Tibial artery (tissue), 4 donors: ENCODE measurements at regions of chr7 and their contacts with region 1.

Region 1: DNA sequence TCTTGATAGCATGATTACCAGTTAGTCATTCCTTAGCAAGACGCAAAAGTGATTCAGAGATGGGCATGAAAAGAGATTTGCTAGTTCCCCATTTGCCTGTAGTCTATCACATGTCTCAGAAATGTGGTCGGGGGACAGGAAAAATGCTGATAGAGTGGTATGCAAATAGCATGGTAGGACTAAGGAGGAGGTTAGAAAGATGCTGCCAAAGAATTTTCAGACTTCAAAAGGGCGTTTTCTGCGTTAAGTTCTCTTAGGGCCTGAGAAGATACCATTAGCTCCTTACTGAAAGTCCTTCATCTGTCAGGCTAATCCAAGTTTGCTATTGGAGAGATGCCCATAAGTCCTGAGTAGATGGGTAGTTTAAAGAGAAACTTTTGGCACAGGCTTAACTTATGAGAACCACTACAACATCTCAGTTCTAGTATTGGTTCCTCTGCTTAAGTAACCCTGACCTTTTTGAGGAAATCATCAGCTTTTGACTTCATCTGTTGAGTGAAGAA is 2.7 kb downstream of the CALD1 start:
- DNase-seq: no peak
- H3K4me3 ChIP-seq: peak overlapping the region; percentile 67 to 70
- H3K27ac ChIP-seq: peak overlapping the region; percentile 89 to 94
- H3K4me1 ChIP-seq: peaks cover 0 to 65% (median 39%) of the 10 kb centered on the region in 4 donors
- H3K27me3 ChIP-seq: no peaks in the 10 kb centered on the region
- CTCF ChIP-seq: no peak

Region 2: GRCh38 chr7:134458806-134459698 is 323.1 kb before region 1 on chr7 and contains the start of gene AKR1B1:
- intact Hi-C with region 1: no loop called
- DNase-seq: peak; percentile 90 to 94
- H3K4me3 ChIP-seq: peak within 1 kb of the TSS; percentile 94 to 99
- H3K27ac ChIP-seq: peak within 1 kb of the TSS; percentile 92
- H3K4me1 ChIP-seq: peaks cover 0 to 33% (median 12%) of the 10 kb centered on the region in 4 donors
- H3K27me3 ChIP-seq: no peaks in the 10 kb centered on the region
- CTCF ChIP-seq: peak; percentile 50 to 59

Region 3: DNA sequence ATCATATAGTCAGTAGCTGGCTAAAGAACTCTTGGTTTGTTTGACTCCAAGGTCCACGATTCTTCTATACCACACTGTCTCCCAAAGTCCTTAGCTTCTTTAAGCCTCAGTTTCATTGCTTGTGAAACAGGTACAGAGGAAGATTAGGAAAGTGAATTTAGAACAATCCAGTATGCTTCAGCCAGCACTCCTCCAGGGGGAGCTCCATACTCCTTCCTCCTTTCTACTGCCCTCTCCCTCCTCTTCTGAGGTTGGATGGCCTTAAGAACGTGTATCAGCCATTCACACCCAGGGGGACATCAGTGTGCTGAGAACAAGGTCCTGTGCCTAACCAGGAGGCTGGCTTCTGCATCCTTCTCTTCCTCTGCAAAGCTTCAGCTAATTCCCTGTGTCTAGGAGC is 57.6 kb before region 1 on chr7:
- intact Hi-C with region 1: loop called (anchors 2 kb)
- DNase-seq: no peak
- H3K4me3 ChIP-seq: no peak overlapping the region
- H3K27ac ChIP-seq: peak overlapping the region; percentile 65 to 66
- H3K4me1 ChIP-seq: peaks cover 0 to 77% (median 42%) of the 10 kb centered on the region in 4 donors
- H3K27me3 ChIP-seq: no peaks in the 10 kb centered on the region
- CTCF ChIP-seq: peak in 1 of 2 experiments; percentile 29

Region 4: DNA sequence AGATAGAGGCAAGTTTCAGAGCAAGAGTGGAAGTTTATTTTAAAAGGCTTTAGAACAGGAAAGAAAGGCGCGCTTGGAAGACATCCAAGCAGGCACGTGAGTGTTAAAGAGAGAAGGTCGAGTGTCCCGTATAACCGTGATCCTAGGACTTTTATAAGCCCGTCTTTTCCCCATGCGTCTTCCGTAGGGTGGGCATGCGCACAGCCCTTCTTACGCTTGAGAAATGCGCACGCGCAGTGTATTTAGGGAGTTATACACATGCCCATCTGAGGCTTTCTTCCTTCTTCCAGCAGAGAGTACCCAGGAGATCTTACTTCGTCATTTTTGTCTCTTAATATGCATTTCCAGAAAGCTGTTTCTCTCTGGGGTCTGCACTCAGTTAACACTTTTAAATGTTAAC is 49.7 kb after region 1 on chr7:
- intact Hi-C with region 1: loop called (anchors 5 kb)
- DNase-seq: peak; percentile 30 to 84
- H3K4me3 ChIP-seq: peak overlapping the region in 1 of 2 donors; percentile 11
- H3K27ac ChIP-seq: peak overlapping the region; percentile 83 to 89
- H3K4me1 ChIP-seq: peaks cover 0 to 96% (median 53%) of the 10 kb centered on the region in 4 donors
- H3K27me3 ChIP-seq: no peaks in the 10 kb centered on the region
- CTCF ChIP-seq: no peak